IMR-90 (cell line): ENCODE measurements at regions of chr12 and their contacts with region 1.

Region 1: DNA sequence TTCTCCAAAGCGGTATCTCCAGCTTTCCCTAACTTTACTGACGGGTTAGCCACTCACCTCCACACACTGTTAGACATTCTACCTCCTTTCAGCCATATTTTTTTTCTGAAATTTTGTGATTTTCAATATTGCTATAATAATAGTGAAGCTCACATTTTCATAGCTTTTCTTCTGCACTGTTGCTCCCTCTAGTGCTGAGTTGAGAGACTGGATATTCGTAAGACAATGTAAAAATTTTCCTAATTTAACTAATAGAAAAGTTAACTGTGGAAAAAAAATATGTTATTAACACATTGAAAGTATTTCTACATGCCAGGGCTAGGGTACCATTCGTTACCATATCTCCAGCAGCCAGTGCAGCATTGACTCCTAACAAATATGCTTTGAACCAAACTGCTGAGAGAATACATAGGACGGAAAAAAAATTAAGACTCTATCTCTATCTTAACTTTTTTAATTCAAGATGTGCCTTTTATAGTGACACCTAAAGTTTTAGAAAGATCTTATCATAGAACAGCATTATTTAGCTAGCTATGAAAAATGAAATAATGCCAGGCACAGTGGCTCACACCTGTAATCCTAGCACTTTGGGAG is 48.7 kb upstream of the ABCC9 start:
- DNase-seq: peak; percentile 66
- ATAC-seq: peak; percentile 73
- H3K4me3 ChIP-seq: no peak overlapping the region
- H3K27ac ChIP-seq: no peak overlapping the region
- H3K4me1 ChIP-seq: no peaks in the 10 kb centered on the region
- H3K27me3 ChIP-seq: no peaks in the 10 kb centered on the region
- CTCF ChIP-seq: peak; percentile 81
- POLR2A ChIP-seq: no peak
- RAD21 ChIP-seq: peak; percentile 83

Region 2: DNA sequence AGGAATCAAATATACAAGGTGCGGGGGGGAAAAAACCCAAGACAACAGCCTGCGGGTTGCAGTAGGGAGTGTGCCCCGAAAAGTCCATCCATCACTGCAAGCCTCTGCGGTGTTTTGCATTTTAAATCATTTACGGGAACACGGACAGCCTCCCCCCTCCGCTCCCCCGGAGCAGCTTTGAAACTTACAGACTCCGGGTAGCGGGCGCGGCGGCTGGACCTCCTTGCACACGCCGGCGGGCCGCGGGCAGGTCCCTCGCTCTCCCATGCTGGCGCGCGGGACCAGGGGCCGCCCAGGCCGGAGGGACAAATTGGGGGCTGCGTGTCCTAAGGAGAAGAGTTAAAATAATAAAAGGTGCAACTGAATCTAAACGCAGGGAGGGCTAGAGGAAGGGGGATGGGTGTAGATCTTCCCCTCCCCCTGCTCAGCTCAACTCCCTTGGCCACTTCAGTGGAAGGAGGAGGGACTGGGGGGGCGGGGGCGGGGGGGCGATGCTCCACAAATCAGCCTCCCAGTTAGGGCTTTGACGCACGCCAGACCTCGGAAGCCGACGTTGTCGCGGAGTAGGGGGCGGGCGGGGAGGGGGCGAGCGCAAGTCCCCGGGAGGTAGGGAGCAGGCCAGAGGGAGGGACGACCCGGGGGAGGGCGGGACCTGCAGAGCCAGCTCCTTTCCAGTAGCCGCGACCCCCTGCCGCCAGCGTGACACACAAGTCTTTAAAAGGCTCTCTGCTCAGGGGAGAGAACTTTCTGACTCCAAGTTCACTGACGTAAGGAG is 215.4 kb before region 1 on chr12 and contains the start of gene KCNJ8:
- CTCF ChIA-PET with region 1: interaction called, 3 read pairs
- POLR2A ChIA-PET with region 1: no interaction called
- dilution Hi-C with region 1: no loop called
- in situ Hi-C with region 1: no loop called
- intact Hi-C with region 1: loop called (anchors 1 kb)
- DNase-seq: peak; percentile 50
- ATAC-seq: peak; percentile 81
- H3K4me3 ChIP-seq: peak within 1 kb of the TSS; percentile 96
- H3K27ac ChIP-seq: peak within 1 kb of the TSS; percentile 15; the same call in 1 of the 2 replicates
- H3K4me1 ChIP-seq: peaks cover 2% of the 10 kb centered on the region; the same call in 1 of the 2 replicates
- H3K27me3 ChIP-seq: no peaks in the 10 kb centered on the region
- CTCF ChIP-seq: no peak
- POLR2A ChIP-seq: no peak
- RAD21 ChIP-seq: no peak
- total RNA-seq, gene KCNJ8: 13.9 and 15.8 TPM in 2 replicates

Region 3: GRCh38 chr12:22130671-22131070 is 140.8 kb after region 1 on chr12:
- CTCF ChIA-PET with region 1: no interaction called
- POLR2A ChIA-PET with region 1: no interaction called
- dilution Hi-C with region 1: no loop called
- in situ Hi-C with region 1: no loop called
- intact Hi-C with region 1: no loop called
- DNase-seq: no peak
- ATAC-seq: no peak
- H3K4me3 ChIP-seq: no peak overlapping the region
- H3K27ac ChIP-seq: no peak overlapping the region
- H3K4me1 ChIP-seq: no peaks in the 10 kb centered on the region
- H3K27me3 ChIP-seq: no peaks in the 10 kb centered on the region
- CTCF ChIP-seq: no peak
- POLR2A ChIP-seq: no peak
- RAD21 ChIP-seq: no peak